ENCODE measurements at regions of chr2 and their contacts with region 1.

Region 1: DNA sequence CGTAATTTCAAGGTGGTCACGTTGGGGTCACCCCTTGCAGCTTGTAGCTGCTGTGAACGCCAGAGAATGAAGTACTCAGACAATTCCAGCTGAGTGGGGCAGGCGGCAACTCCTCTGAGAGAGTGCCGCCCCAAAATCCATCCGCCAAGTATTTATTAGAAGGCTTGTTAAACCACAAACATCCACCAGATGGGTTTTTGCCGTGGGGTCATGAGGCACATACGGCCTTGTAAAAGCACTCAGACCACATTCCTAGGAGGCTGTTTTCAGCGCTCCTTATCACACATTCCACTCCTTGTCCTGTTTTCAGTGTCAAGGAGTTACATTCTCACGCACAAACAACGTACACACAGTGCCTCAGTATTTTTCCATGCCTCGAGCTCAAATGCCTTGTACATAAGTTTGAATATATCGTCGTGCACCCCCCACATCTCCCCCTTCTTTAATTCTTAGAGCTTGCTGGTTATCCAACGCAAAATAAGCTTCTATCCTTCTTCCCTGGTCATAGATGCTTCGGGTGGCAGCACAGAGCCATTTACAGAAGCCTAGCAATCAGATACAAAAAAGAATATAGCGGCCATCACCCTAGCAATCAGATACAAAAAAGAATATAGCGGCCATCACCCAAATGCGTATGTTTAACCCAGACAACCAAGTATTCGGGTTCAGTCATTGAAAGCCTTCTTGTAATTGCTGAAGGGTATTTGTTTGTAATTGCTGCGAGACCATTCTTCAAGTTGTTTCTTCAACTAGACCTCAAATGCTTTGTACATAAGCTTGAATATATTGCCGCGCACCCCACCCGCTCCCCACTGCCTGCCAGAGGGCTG is 7.3 kb downstream of the ALPP start:
- DNase-seq: peak; percentile 77 to 90
- H3K4me3 ChIP-seq: no peak overlapping the region
- H3K4me3 Mint-ChIP-seq: peak overlapping the region; percentile 72
- H3K27ac Mint-ChIP-seq: peak overlapping the region; percentile 89
- H3K4me1 ChIP-seq: peaks cover 16% of the 10 kb centered on the region
- H3K4me1 Mint-ChIP-seq: peaks cover 20% of the 10 kb centered on the region
- H3K27me3 ChIP-seq: no peaks in the 10 kb centered on the region
- H3K27me3 Mint-ChIP-seq: no peaks in the 10 kb centered on the region
- CTCF ChIP-seq: no peak

Region 2: GRCh38 chr2:232321156-232321816 is 64.6 kb before region 1 on chr2:
- CTCF ChIA-PET with region 1: no interaction called
- POLR2A ChIA-PET with region 1: no interaction called
- intact Hi-C with region 1: no loop called
- DNase-seq: no peak
- H3K4me3 ChIP-seq: no peak overlapping the region
- H3K4me3 Mint-ChIP-seq: no peak overlapping the region
- H3K27ac Mint-ChIP-seq: no peak overlapping the region
- H3K4me1 ChIP-seq: no peaks in the 10 kb centered on the region
- H3K4me1 Mint-ChIP-seq: no peaks in the 10 kb centered on the region
- H3K27me3 ChIP-seq: no peaks in the 10 kb centered on the region
- H3K27me3 Mint-ChIP-seq: no peaks in the 10 kb centered on the region
- CTCF ChIP-seq: no peak

Region 3: DNA sequence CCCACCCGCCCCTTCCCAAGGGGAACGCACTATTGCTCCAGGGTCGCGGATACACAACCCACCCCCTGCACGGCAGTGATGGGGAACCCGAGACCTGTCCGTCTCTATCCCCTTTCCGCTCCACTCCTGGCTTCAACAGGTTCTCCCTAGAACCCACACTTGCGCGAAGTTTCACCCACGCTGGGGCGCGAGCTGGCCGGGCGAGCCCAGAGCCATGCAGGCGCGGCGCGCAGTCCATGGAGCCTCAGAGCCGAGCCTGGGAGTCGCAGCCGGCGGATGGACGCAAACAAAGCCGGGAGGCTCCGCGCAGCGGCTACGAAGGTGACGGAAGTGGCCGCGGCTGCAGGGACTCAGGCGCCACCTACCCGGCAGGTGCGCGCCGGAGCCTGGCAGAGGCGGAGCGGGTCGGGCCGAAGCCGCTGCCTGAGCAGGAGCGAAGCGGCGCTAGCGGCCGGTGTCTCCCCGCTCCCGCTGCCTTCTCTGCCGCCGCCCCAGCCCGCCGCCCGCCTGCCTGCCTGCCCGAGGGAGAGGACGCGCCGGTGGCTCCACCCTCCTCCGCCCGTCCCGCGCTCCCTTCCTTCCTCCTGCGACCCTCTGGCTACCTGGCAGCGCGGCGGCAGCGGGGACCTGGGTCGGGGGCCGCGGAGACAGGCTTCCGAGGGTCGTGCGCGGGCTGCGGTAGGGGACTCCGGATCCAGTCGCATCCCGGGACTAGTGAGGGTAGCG is 34.8 kb after region 1 on chr2:
- CTCF ChIA-PET with region 1: no interaction called
- POLR2A ChIA-PET with region 1: no interaction called
- intact Hi-C with region 1: loop called (anchors 5 kb)
- DNase-seq: peak; percentile 50 to 64
- H3K4me3 ChIP-seq: peak overlapping the region; percentile 20
- H3K4me3 Mint-ChIP-seq: peak overlapping the region; percentile 66
- H3K27ac Mint-ChIP-seq: no peak overlapping the region
- H3K4me1 ChIP-seq: no peaks in the 10 kb centered on the region
- H3K4me1 Mint-ChIP-seq: no peaks in the 10 kb centered on the region
- H3K27me3 ChIP-seq: no peaks in the 10 kb centered on the region
- H3K27me3 Mint-ChIP-seq: no peaks in the 10 kb centered on the region
- CTCF ChIP-seq: no peak

Region 4: GRCh38 chr2:232438951-232439757 is 53.3 kb after region 1 on chr2:
- CTCF ChIA-PET with region 1: interaction called, 7 read pairs
- POLR2A ChIA-PET with region 1: interaction called, 3 read pairs
- intact Hi-C with region 1: loop called (anchors 1 kb)
- DNase-seq: peak; percentile 48 to 63
- H3K4me3 ChIP-seq: no peak overlapping the region
- H3K4me3 Mint-ChIP-seq: no peak overlapping the region
- H3K27ac Mint-ChIP-seq: no peak overlapping the region
- H3K4me1 ChIP-seq: 0 out of 2 replicates have a peak, but pooled peaks cover 3% of the 10 kb centered on the region
- H3K4me1 Mint-ChIP-seq: no peaks in the 10 kb centered on the region
- H3K27me3 ChIP-seq: no peaks in the 10 kb centered on the region
- H3K27me3 Mint-ChIP-seq: no peaks in the 10 kb centered on the region
- CTCF ChIP-seq: peak; percentile 1 to 26

Region 5: DNA sequence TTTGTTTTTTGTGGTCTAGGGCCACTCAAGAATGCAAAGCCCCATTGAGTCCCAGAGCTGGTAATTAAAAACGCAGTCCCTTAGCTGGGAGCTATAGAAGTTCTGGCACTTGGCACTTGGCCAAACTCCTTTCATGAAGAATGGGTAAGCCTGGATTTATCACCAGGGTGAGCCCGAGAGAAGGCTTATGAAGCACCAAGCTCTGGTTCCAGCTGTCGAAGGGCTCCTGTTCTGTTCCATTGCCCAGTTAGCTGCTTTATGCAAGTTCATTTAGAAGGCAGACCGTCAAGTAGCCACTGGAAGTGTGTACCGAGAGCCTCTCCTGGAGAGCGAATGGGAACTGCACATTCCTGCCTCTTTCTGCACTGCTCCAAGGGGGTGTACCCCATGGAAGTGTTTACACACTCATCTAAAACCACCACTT is 87.6 kb after region 1 on chr2:
- CTCF ChIA-PET with region 1: no interaction called
- POLR2A ChIA-PET with region 1: no interaction called
- intact Hi-C with region 1: no loop called
- DNase-seq: no peak
- H3K4me3 ChIP-seq: no peak overlapping the region
- H3K4me3 Mint-ChIP-seq: no peak overlapping the region
- H3K27ac Mint-ChIP-seq: no peak overlapping the region
- H3K4me1 ChIP-seq: no peaks in the 10 kb centered on the region
- H3K4me1 Mint-ChIP-seq: no peaks in the 10 kb centered on the region
- H3K27me3 ChIP-seq: no peaks in the 10 kb centered on the region; the same call in 1 of the 2 replicates
- H3K27me3 Mint-ChIP-seq: peaks cover 2% of the 10 kb centered on the region
- CTCF ChIP-seq: no peak

Region 6: GRCh38 chr2:232689152-232689910 is 303.5 kb after region 1 on chr2:
- CTCF ChIA-PET with region 1: no interaction called
- POLR2A ChIA-PET with region 1: no interaction called
- intact Hi-C with region 1: no loop called
- DNase-seq: no peak
- H3K4me3 ChIP-seq: no peak overlapping the region
- H3K4me3 Mint-ChIP-seq: no peak overlapping the region
- H3K27ac Mint-ChIP-seq: no peak overlapping the region
- H3K4me1 ChIP-seq: no peaks in the 10 kb centered on the region
- H3K4me1 Mint-ChIP-seq: no peaks in the 10 kb centered on the region
- H3K27me3 ChIP-seq: no peaks in the 10 kb centered on the region
- H3K27me3 Mint-ChIP-seq: no peaks in the 10 kb centered on the region
- CTCF ChIP-seq: no peak